ENCODE measurements at regions of chr5 and their contacts with region 1.

Region 1: GRCh38 chr5:123371575-123372179 is 51.5 kb downstream of the CEP120 start:
- DNase-seq: no peak
- ATAC-seq: no peak
- H3K4me3 ChIP-seq: no peak overlapping the region
- H3K4me3 Mint-ChIP-seq: no peak overlapping the region
- H3K27ac ChIP-seq: no peak overlapping the region
- H3K27ac Mint-ChIP-seq: peak overlapping the region in 1 of 9 donors; percentile 7
- H3K4me1 ChIP-seq: no peaks in the 10 kb centered on the region
- H3K4me1 Mint-ChIP-seq: peaks cover 0 to 27% (median 2%) of the 10 kb centered on the region in 7 donors
- H3K27me3 ChIP-seq: no peaks in the 10 kb centered on the region
- H3K27me3 Mint-ChIP-seq: no peaks in the 10 kb centered on the region

Region 2: DNA sequence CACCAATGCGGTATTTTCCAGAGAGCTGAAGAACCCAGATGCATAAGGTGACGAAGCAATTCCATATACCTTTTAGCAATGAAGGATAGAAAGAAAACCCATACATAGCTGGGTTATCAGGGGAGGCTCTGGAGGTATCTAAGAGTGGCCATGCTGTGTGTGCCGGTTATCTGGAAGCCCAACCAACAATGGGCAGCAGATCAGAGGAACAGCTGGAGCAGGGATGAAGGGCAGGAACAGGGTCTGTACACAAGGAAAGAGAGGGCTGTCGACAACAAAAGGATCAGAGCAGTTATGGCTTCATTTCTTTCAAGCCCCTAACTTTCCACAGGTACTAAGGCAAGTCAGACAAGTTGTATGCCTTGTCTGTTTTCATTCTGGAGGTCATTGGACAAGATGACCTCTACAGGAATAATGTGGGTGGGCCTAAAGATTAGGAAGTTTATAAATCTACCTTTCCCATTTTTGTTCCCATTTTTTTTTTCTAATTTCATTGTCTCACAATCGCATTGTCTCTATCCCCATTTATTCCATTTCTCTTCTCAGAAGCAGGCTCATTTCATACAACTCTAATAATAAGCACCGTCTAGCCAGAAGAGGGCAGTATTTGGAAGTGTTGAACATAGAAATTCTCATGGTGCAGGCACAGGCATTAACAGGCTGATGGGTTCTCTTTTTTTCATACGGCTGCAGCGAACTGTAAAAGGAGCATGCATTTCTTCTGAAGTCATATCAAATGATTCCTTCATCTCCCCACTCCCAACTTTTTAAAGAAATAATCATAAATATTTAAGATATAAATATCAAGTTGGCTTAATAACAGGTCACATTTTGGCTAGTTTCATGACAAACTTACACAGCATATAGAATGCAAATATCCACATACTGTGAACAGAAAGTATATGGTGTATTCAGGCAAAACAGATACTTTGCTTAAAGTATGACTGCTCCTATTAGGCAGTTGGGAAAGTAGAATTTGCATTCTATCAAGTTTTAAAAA is 1178.9 kb before region 1 on chr5:
- CTCF ChIA-PET with region 1: no interaction called
- POLR2A ChIA-PET with region 1: no interaction called
- intact Hi-C with region 1: loop called in 1 of 2 experiments (anchors 10 kb)
- DNase-seq: peak in 4 of 9 donors; percentile 2 to 11 (median 4)
- ATAC-seq: peak; percentile 63
- H3K4me3 ChIP-seq: no peak overlapping the region
- H3K4me3 Mint-ChIP-seq: no peak overlapping the region
- H3K27ac ChIP-seq: no peak overlapping the region
- H3K27ac Mint-ChIP-seq: no peak overlapping the region
- H3K4me1 ChIP-seq: no peaks in the 10 kb centered on the region
- H3K4me1 Mint-ChIP-seq: no peaks in the 10 kb centered on the region
- H3K27me3 ChIP-seq: no peaks in the 10 kb centered on the region
- H3K27me3 Mint-ChIP-seq: peaks cover 3 to 46% (median 29%) of the 10 kb centered on the region in 5 donors

Region 3: GRCh38 chr5:122500245-122501075 is 871.2 kb before region 1 on chr5:
- CTCF ChIA-PET with region 1: no interaction called
- POLR2A ChIA-PET with region 1: no interaction called
- intact Hi-C with region 1: loop called in 1 of 2 experiments (anchors 2 kb)
- DNase-seq: no peak
- ATAC-seq: no peak
- H3K4me3 ChIP-seq: no peak overlapping the region
- H3K4me3 Mint-ChIP-seq: no peak overlapping the region
- H3K27ac ChIP-seq: no peak overlapping the region
- H3K27ac Mint-ChIP-seq: no peak overlapping the region
- H3K4me1 ChIP-seq: no peaks in the 10 kb centered on the region
- H3K4me1 Mint-ChIP-seq: no peaks in the 10 kb centered on the region
- H3K27me3 ChIP-seq: no peaks in the 10 kb centered on the region
- H3K27me3 Mint-ChIP-seq: peaks cover 0 to 20% (median 7%) of the 10 kb centered on the region in 5 donors

Region 4: DNA sequence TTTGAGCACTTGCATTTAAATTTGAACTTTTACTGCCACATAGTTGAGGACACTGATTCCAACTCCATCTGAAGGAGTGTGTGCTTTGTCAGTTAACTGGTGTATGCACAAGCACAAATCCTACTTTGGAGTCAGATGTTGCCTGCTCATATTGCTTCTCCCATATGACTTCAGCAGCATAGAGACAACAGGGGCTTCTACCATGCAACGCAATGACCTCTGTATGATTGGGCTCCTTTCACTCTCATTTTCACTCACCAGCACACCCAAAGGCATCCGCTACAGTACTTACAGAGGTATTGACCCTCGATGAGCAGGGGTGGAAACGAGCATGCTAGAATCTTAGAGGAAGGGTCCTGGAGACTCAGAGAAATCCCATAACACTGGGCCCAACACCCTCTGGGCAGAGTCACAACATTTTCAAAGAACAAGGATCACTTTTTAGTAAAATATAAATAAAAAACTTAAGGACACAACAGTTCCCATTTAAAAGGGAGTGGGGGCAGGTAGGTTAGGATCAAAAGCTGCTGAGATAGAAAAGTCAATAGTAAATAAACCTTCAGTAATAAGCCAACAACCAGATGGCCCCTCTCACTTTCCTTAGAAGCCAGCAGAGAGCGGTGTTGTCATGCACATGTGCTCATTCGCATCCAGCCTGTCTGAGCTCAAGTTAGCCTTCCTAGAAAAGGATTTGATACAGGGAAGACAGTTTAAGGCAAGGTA is 855.8 kb before region 1 on chr5:
- CTCF ChIA-PET with region 1: no interaction called
- POLR2A ChIA-PET with region 1: no interaction called
- intact Hi-C with region 1: loop called in 1 of 2 experiments (anchors 2 kb)
- DNase-seq: no peak
- ATAC-seq: no peak
- H3K4me3 ChIP-seq: no peak overlapping the region
- H3K4me3 Mint-ChIP-seq: no peak overlapping the region
- H3K27ac ChIP-seq: no peak overlapping the region
- H3K27ac Mint-ChIP-seq: no peak overlapping the region
- H3K4me1 ChIP-seq: no peaks in the 10 kb centered on the region
- H3K4me1 Mint-ChIP-seq: no peaks in the 10 kb centered on the region
- H3K27me3 ChIP-seq: no peaks in the 10 kb centered on the region
- H3K27me3 Mint-ChIP-seq: peaks cover 0 to 12% (median 0%) of the 10 kb centered on the region in 5 donors

Region 5: GRCh38 chr5:122907238-122907637 is 464.4 kb before region 1 on chr5:
- CTCF ChIA-PET with region 1: no interaction called
- POLR2A ChIA-PET with region 1: no interaction called
- intact Hi-C with region 1: loop called in 1 of 2 experiments (anchors 10 kb)
- DNase-seq: no peak
- ATAC-seq: no peak
- H3K4me3 ChIP-seq: no peak overlapping the region
- H3K4me3 Mint-ChIP-seq: no peak overlapping the region
- H3K27ac ChIP-seq: no peak overlapping the region
- H3K27ac Mint-ChIP-seq: no peak overlapping the region
- H3K4me1 ChIP-seq: peaks cover 3 to 9% of the 10 kb centered on the region in 2 donors
- H3K4me1 Mint-ChIP-seq: peaks cover 4 to 11% (median 8%) of the 10 kb centered on the region in 7 donors
- H3K27me3 ChIP-seq: no peaks in the 10 kb centered on the region
- H3K27me3 Mint-ChIP-seq: no peaks in the 10 kb centered on the region

Region 6: GRCh38 chr5:123391009-123391408 is 19.3 kb after region 1 on chr5:
- CTCF ChIA-PET with region 1: no interaction called
- POLR2A ChIA-PET with region 1: no interaction called
- intact Hi-C with region 1: no loop called
- DNase-seq: no peak
- ATAC-seq: no peak
- H3K4me3 ChIP-seq: no peak overlapping the region
- H3K4me3 Mint-ChIP-seq: no peak overlapping the region
- H3K27ac ChIP-seq: no peak overlapping the region
- H3K27ac Mint-ChIP-seq: no peak overlapping the region
- H3K4me1 ChIP-seq: no peaks in the 10 kb centered on the region
- H3K4me1 Mint-ChIP-seq: peaks cover 0 to 1% (median 0%) of the 10 kb centered on the region in 7 donors
- H3K27me3 ChIP-seq: no peaks in the 10 kb centered on the region
- H3K27me3 Mint-ChIP-seq: no peaks in the 10 kb centered on the region